ENCODE measurements at regions of chr22 and their contacts with region 1.

Region 1: DNA sequence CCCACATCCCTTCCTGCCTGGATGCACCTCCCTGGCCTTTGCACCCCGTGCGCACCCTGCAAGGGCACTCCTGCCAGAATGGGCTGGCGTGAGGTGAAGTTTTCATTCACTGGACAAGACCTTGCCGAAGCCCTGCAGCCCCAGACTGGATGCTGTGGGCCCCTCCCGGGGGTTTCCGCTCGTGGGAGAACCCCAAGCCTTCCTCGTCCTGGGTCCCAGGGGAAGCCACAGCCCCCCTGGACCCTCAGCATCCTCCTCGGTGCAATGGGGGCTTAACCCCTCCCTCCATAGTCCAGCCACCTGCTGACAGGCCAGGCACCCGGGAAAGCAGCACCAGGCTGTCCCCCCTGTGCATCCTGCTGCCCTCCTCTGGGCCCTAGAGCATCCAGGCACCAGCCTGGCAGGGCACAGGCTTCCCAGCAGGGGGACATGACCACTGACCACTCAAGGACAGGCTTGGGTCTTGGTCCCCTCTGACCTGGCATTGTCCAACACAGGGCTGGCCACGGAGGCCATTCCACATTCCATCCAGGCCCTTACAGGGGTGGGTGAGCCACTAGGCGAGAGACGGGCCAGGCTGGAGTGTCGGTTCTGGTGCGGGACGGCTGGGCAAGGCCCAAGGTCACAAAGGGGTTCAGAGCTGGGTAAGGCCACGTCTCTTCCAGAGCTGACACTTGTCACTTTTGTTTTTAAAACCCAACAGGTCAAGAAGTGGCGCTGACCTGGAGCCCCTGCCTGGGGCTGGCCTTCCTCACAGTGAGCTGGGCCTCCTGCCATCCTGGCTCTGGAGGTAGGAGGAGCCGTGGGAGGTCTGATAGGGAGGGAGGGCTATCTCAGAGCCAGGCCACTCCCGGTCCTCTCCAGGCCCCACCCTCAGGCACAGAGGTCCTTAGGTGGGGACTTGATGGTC is 41.5 kb upstream of the PPARA start:
- DNase-seq: no peak

Region 2: DNA sequence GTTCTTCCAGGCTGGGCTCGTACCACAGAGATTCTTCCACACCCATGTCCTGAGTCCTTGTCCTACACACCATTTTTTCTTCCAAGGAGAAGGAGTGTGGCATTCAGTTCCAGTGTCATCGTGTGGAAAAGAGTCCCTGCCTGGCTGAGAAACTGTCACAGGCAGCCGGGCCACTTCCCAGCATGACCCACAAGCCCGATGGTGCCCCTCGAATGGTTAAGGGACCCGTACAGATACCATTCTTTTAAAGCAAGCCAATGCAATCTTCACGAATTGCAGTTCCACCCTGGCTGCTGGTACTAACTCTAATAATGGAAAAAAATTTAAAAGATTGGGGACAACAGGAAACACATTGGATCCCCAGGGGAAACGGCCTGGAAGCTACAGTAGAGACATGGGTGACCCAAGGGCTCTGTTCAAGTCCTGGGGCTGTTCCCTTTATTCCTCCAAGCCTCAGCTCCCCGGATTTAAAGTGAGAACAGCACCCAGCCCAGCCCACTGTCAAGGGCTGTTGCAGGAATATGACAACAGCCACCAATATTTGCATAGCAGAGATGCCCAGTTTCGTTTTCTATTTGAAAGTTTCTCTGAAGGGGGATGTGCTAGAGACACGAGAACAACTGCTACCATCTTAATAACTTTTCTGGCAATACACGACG is 50.9 kb before region 1 on chr22:
- intact Hi-C with region 1: loop called in 1 of 2 experiments (anchors 10 kb)
- DNase-seq: peak; percentile 82

Region 3: DNA sequence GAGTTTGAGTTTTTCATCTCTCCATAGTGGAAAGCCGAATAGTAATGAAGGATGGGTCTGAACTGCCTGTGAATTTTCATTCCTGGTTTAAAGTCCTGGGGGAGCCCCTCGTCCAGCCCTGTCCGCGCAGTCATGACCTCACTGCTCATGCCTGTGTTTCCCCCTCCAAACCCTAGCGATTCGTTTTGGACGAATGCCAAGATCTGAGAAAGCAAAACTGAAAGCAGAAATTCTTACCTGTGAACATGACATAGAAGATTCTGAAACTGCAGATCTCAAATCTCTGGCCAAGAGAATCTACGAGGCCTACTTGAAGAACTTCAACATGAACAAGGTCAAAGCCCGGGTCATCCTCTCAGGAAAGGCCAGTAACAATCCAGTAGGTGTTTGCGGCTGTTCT is 110.8 kb after region 1 on chr22:
- intact Hi-C with region 1: no loop called
- DNase-seq: no peak